A673 (cell line): ENCODE measurements at regions of chr2 and their contacts with region 1.

Region 1: DNA sequence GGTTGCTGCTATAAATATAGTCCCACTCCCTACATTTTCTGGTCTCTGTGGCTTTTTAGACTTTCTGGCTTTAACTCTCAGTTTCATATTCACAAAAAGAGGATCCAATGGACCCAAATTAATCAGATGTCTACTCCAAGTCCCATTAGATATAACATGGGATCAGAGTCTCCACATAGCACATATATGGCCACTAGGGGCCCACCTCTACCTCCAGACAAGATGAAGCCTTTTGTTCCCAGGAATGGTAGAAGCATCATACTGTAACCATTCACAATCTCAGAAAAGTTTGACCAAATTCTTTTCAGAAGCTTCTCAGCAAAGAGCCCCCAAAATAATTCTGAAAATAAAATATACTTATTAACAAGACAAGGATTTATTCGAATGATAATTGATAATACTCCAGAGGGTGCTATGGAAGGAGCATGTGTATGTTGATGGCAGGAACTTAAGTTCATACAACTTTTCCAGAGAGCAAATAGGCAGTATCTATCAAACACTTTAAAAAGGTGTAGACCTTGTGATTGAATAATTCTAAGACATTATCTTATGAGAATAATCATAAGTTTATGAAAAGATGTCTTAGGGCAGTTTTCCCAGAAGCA is 382.3 kb upstream of the CRIM1 start:
- DNase-seq: peak; percentile 56
- H3K4me3 ChIP-seq: no peak overlapping the region
- H3K27ac ChIP-seq: no peak overlapping the region
- H3K4me1 ChIP-seq: no peaks in the 10 kb centered on the region
- H3K27me3 ChIP-seq: no peaks in the 10 kb centered on the region
- CTCF ChIP-seq: peak; percentile 72

Region 2: DNA sequence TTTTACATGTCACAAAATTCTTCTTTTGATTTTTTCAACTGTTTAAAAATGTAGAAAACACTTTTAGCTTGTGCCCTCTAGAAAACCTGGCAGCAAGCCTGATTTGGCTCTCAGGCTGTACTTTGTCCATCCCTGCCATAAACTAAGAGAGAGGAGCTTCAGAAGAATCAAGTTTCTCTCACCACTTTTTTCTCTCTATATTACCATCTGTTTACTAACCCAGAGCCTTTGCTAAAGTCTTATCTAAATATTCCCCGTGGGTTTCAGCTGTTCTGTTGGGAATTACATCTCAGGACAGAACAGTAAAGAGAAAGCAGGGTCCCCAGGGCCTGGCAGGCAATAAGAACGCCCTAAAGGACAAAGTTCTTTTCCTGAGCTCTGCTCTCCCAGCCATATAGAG is 26.8 kb before region 1 on chr2:
- CTCF ChIA-PET with region 1: no interaction called
- POLR2A ChIA-PET with region 1: no interaction called
- intact Hi-C with region 1: no loop called
- DNase-seq: no peak
- H3K4me3 ChIP-seq: no peak overlapping the region
- H3K27ac ChIP-seq: no peak overlapping the region
- H3K4me1 ChIP-seq: no peaks in the 10 kb centered on the region
- H3K27me3 ChIP-seq: no peaks in the 10 kb centered on the region
- CTCF ChIP-seq: no peak

Region 3: DNA sequence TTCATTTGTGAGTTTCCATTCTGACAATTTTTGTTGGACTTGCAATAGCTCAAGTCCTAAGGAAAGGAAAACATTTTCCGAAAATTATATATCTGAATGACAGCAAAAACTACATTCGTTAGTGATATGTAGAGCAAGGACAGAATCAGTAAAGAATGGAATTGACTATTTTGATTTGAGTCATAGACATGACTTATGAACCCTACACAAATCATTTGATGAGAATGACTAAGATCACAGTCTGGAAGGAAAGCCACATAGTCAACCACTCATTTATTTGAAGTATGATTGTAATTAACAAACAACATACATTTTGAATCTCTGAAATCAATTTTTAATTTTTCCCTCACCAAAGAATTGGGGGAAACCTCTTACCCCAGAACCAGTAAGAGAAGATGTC is 150.8 kb after region 1 on chr2:
- CTCF ChIA-PET with region 1: no interaction called
- POLR2A ChIA-PET with region 1: no interaction called
- intact Hi-C with region 1: no loop called
- DNase-seq: no peak
- H3K4me3 ChIP-seq: no peak overlapping the region
- H3K27ac ChIP-seq: no peak overlapping the region
- H3K4me1 ChIP-seq: no peaks in the 10 kb centered on the region
- H3K27me3 ChIP-seq: peaks cover 5% of the 10 kb centered on the region
- CTCF ChIP-seq: no peak

Region 4: GRCh38 chr2:36322108-36322507 is 348.9 kb after region 1 on chr2:
- CTCF ChIA-PET with region 1: no interaction called
- POLR2A ChIA-PET with region 1: no interaction called
- intact Hi-C with region 1: loop called (anchors 5 kb)
- DNase-seq: peak; percentile 61
- H3K4me3 ChIP-seq: no peak overlapping the region
- H3K27ac ChIP-seq: no peak overlapping the region
- H3K4me1 ChIP-seq: no peaks in the 10 kb centered on the region
- H3K27me3 ChIP-seq: no peaks in the 10 kb centered on the region
- CTCF ChIP-seq: peak; percentile 67

Region 5: DNA sequence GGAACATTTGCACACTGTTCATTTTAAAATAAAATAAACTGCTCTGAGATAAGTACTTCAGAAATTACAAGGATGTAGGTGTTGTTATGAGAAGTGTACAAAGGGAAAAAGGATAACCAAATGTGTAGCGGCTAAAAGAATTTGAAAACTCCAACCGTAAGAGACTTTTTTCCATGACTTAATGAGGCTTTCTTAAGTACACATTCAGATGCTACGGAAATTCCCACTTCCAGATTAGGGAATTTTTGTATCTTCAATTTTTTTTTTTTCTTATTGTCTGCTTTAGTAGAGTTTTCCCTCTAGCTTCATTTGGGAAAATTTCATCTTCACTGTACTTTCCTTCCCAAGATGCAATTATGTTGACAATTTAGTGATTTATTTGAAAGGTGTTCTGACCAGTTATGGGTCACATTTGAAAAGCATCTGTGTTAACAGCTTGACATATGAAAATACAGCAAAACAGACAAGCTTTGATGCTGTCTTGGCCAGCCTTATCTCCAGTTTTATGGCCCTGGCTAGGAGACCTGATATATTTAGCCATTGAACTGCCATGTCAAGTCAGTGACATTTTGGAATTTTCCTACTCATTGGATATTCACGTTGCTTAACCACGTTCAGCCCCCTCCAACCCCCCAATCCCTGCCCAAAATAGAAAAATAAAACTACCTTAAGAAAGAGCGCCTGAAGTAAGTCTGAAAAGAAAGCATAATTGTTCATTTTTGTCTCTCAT is 519.1 kb after region 1 on chr2:
- CTCF ChIA-PET with region 1: no interaction called
- POLR2A ChIA-PET with region 1: no interaction called
- intact Hi-C with region 1: loop called (anchors 10 kb)
- DNase-seq: no peak
- H3K4me3 ChIP-seq: no peak overlapping the region
- H3K27ac ChIP-seq: no peak overlapping the region
- H3K4me1 ChIP-seq: peaks cover 33% of the 10 kb centered on the region
- H3K27me3 ChIP-seq: no peaks in the 10 kb centered on the region
- CTCF ChIP-seq: no peak

Region 6: GRCh38 chr2:36663851-36664695 is 690.8 kb after region 1 on chr2:
- CTCF ChIA-PET with region 1: no interaction called
- POLR2A ChIA-PET with region 1: no interaction called
- intact Hi-C with region 1: loop called (anchors 10 kb)
- DNase-seq: peak; percentile 88
- H3K4me3 ChIP-seq: no peak overlapping the region
- H3K27ac ChIP-seq: no peak overlapping the region
- H3K4me1 ChIP-seq: no peaks in the 10 kb centered on the region
- H3K27me3 ChIP-seq: no peaks in the 10 kb centered on the region
- CTCF ChIP-seq: peak; percentile 87